Motor neuron (in vitro differentiated cells): ENCODE measurements at regions of chr4 and their contacts with region 1.

Region 1: GRCh38 chr4:150867148-150867547 is 147.9 kb downstream of the LRBA start:
- ATAC-seq: peak; percentile 32 to 91 (median 58)
- H3K4me3 ChIP-seq: no peak overlapping the region
- H3K27ac ChIP-seq: no peak overlapping the region
- H3K4me1 ChIP-seq: no peaks in the 10 kb centered on the region

Region 2: DNA sequence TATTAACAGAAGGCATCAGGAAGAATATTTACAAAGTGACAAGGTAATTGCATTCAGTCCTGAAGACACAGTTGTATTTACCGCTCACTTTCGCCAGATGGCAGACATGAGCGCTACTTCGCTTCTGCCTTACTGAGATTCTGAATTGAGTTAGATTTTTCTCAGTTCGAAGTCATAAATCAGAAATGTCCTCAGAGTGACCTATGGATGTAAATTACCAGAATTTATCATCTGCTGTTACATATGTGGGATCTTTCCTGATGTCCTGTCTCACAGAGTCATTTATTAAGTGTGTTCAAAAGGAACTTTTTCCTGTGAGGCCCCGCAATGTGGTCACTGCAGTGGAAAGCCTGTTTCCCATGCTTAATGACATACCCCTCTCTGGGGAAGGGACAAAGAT is 886.2 kb before region 1 on chr4:
- in situ Hi-C with region 1: loop called in 1 of 9 experiments (anchors 25 kb)
- ATAC-seq: peak; percentile 74 to 97 (median 83)
- H3K4me3 ChIP-seq: no peak overlapping the region
- H3K27ac ChIP-seq: no peak overlapping the region
- H3K4me1 ChIP-seq: peaks cover 0 to 11% of the 10 kb centered on the region in 2 donors

Region 3: GRCh38 chr4:150297861-150298474 is 569.2 kb before region 1 on chr4:
- in situ Hi-C with region 1: loop called in 6 of 9 experiments (anchors 10 to 25 kb)
- ATAC-seq: peak in 3 of 8 experiments; percentile 28 to 66 (median 52)
- H3K4me3 ChIP-seq: no peak overlapping the region
- H3K27ac ChIP-seq: no peak overlapping the region
- H3K4me1 ChIP-seq: peaks cover 0 to 2% of the 10 kb centered on the region in 2 donors